ENCODE measurements at regions of chr1 and their contacts with region 1.

Region 1: GRCh38 chr1:53959664-53960250 is 13.6 kb downstream of the LRRC42 start:
- DNase-seq: no peak
- ATAC-seq: no peak

Region 2: GRCh38 chr1:54028306-54029251 is 68.8 kb after region 1 on chr1:
- intact Hi-C with region 1: loop called (anchors 5 kb)
- DNase-seq: no peak
- ATAC-seq: peak; percentile 60